Activated naive CD4-positive, alpha-beta T cell treated with anti-CD3 and anti-CD28 coated beads for 36 hours (primary cell): ENCODE measurements at regions of chr12 and their contacts with region 1.

Region 1: DNA sequence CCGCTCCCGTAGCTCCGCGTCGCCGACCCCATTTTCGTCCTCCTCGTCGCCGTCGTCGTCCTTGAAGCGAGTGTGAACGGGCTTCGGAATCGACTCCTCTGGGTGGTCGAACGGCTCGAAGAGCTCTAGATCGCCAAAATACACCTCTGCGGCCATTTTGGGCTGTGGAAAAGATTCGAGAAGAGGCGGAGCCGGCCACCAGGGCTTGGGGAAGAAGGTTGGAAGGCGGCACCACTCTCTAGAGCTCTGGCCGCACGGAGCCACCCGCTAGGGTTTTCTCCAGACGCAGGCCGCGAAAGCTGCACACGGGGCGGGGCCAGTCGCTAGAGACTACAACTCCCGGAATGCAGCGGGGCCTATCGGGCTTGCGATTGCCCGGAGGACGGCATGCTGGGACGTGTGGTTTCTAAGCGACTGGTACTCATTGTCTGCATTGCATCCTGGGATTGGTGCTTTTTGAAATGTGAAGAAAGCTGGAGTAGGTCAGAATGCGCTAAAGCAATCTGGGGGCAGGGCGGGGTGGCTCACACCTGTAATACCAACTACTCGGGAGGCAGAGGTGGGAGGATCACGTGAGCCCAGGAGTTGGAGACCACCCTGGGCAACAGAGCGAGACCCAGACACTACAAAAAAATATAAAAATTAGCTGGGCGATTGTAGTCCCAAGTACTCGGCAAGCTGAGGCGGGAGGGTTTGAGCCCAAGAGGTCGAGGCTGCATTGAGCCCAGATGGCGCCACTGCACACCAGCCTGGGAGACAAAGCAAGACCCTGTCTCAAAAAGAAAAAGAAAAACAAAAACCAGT is at the start of gene ZCCHC8:
- DNase-seq: peak; percentile 98
- H3K4me3 Mint-ChIP-seq: peak within 1 kb of the TSS; percentile 93
- H3K27ac Mint-ChIP-seq: peak within 1 kb of the TSS; percentile 97
- H3K4me1 Mint-ChIP-seq: peaks cover 39% of the 10 kb centered on the region
- H3K27me3 Mint-ChIP-seq: no peaks in the 10 kb centered on the region
- total RNA-seq, gene ZCCHC8: 25.9 to 26.0 TPM

Region 2: GRCh38 chr12:122265931-122266771 is 234.7 kb before region 1 on chr12 and contains the start of gene VPS33A:
- CTCF ChIA-PET with region 1: interaction called, 3 read pairs
- intact Hi-C with region 1: loop called (anchors 1 kb)
- DNase-seq: peak; percentile 95
- H3K4me3 Mint-ChIP-seq: peak within 1 kb of the TSS; percentile 94
- H3K27ac Mint-ChIP-seq: peak within 1 kb of the TSS; percentile 96
- H3K4me1 Mint-ChIP-seq: peaks cover 23% of the 10 kb centered on the region
- H3K27me3 Mint-ChIP-seq: peaks cover 3% of the 10 kb centered on the region
- total RNA-seq, gene VPS33A: 15.9 to 17.2 TPM

Region 3: DNA sequence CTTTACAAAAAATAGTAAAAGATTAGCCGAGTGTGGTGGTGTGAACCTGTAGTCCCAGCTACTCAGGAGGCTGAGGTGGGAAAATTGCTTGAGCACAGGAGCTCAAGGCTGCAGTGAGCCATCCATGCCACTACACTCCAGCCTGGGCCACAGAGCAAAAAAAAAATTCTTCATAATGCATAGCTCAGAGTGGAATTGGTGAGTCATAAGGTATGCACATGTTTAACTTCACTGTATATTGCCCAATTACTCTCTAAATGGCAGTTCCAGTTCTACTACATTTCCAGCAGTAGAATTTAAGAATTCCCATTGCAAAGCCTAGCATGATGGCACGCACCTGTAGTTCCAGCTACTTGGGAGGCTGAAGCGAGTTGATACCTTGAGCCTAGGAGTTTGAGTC is 51.5 kb before region 1 on chr12:
- CTCF ChIA-PET with region 1: interaction called, 5 read pairs
- intact Hi-C with region 1: loop called (anchors 1 kb)
- DNase-seq: peak; percentile 38
- H3K4me3 Mint-ChIP-seq: no peak overlapping the region
- H3K27ac Mint-ChIP-seq: no peak overlapping the region
- H3K4me1 Mint-ChIP-seq: peaks cover 30% of the 10 kb centered on the region
- H3K27me3 Mint-ChIP-seq: no peaks in the 10 kb centered on the region

Region 4: GRCh38 chr12:122732170-122732569 is 231.3 kb after region 1 on chr12:
- CTCF ChIA-PET with region 1: interaction called, 3 read pairs
- intact Hi-C with region 1: loop called (anchors 1 kb)
- DNase-seq: peak; percentile 69
- H3K4me3 Mint-ChIP-seq: no peak overlapping the region
- H3K27ac Mint-ChIP-seq: peak overlapping the region; percentile 89
- H3K4me1 Mint-ChIP-seq: peaks cover 75% of the 10 kb centered on the region
- H3K27me3 Mint-ChIP-seq: no peaks in the 10 kb centered on the region

Region 5: GRCh38 chr12:123094349-123095074 is 593.6 kb after region 1 on chr12:
- CTCF ChIA-PET with region 1: no interaction called
- intact Hi-C with region 1: no loop called
- DNase-seq: no peak
- H3K4me3 Mint-ChIP-seq: no peak overlapping the region
- H3K27ac Mint-ChIP-seq: no peak overlapping the region
- H3K4me1 Mint-ChIP-seq: peaks cover 13% of the 10 kb centered on the region
- H3K27me3 Mint-ChIP-seq: no peaks in the 10 kb centered on the region